ENCODE measurements at regions of chr4 and their contacts with region 1.

Region 1: DNA sequence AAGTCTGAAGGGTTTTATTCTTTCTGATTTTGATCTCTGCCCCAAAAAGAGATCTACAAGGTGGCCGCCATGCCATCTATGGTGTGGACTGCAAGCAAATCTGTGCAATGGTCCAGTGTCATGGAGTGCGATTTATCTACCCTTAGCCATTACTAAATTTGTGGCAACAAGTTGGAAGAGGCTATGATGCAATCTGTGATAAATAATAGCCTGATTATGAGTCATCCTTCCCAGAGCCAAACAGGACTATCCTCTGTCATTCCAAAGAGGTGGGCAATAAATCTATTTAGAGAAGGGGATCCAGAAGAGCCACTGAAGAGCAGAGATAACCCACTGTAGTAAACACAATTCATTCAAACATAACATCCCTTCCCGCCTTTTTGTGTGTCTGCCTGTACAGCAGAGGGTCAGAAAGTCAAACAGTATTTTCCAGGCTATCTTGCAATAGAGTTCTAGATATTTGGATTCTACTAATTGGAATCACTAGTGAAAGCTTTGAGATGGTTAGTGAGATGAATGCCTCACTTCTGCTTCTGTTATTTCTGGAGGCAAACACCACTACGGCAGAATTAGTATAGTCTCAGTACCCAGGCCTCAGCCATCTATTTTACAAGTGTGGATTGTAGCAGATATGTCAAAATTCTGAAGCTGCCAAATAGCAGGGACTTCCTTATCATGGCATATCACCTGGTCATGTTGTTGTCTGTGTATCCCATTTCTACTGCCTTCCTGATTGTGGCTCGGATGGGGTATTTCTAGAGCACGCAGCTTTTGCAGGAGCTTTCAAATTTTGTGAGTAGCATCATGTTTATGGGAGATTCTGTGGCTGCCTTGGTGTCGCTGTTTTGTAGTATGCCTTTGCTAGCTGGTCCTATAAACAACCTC is 192.0 kb downstream of the SMIM20 start:
- DNase-seq: no peak
- H3K4me3 Mint-ChIP-seq: no peak overlapping the region
- H3K27ac Mint-ChIP-seq: no peak overlapping the region
- H3K4me1 Mint-ChIP-seq: peaks cover 33% of the 10 kb centered on the region
- H3K27me3 Mint-ChIP-seq: no peaks in the 10 kb centered on the region

Region 2: DNA sequence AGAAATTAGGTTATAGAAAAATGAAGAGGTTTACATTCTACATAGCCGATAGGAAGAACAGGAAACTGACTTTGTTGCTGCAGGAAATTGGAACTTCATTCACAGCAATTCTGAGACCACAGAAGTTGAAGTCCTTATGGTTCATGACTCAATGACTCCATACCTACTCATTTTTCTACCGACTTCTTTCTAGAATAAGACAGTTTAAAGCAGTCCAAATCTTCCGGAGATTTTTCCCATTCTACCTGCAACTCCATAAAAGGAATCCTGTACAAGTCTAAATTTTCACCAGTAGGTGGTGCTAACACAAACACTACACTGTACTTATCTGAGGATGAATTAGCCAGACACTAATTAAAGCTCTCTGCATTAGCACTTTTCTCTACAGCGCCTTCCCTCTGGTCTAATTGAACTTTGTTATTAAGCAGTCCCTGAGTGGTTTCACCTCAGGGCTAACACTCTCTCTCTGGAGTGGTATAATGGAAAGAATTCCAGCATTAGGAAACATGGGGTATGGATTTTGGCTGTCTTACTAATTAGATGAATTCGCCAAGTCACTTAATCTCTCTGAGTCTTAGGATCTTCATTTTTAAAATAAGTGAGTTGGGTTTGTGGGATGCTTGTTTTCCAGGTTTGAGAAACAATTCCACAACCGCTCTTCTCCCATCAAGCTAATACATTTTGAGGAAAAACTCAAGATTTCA is 24.1 kb before region 1 on chr4:
- CTCF ChIA-PET with region 1: no interaction called
- POLR2A ChIA-PET with region 1: interaction called, 11 read pairs
- DNase-seq: no peak
- H3K4me3 Mint-ChIP-seq: peak overlapping the region; percentile 2
- H3K27ac Mint-ChIP-seq: peak overlapping the region; percentile 75
- H3K4me1 Mint-ChIP-seq: peaks cover 82% of the 10 kb centered on the region
- H3K27me3 Mint-ChIP-seq: no peaks in the 10 kb centered on the region

Measured in activated CD4-positive, alpha-beta memory T cell treated with anti-CD3 and anti-CD28 coated beads, Interleukin-2, amount 10 ng/mL, durations not matched to agents 7 days and 5 days (primary cell).